GM12878 (cell line): ENCODE measurements at regions of chr7 and their contacts with region 1.

Region 1: GRCh38 chr7:132895231-132895630 is 186.7 kb downstream of the CHCHD3 start:
- DNase-seq: no peak
- ATAC-seq: no peak
- H3K4me3 ChIP-seq: no peak overlapping the region
- H3K27ac ChIP-seq: no peak overlapping the region
- H3K4me1 ChIP-seq: no peaks in the 10 kb centered on the region
- H3K27me3 ChIP-seq: no peaks in the 10 kb centered on the region
- CTCF ChIP-seq: no peak
- EP300 ChIP-seq: no peak
- POLR2A ChIP-seq: no peak
- RAD21 ChIP-seq: no peak

Region 2: DNA sequence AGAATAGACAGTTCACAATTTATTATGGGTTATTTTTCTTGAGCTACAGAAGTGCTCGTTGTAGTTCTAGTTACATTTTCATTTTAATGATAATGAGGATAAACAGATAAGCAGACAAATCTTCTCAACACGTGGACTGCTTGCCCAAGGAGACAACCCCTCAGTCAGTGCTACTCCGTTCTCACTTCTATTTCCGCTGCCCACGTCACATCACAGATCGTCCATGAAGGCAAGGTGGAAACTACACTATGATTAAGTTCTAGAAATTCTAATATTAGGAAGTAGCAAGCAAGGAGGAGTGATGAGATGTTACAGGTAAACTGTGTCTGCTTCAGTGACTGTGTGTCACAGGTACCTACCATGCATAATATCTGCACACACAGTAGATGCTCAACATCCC is 23.8 kb before region 1 on chr7:
- CTCF ChIA-PET with region 1: interaction called, 3 read pairs
- POLR2A ChIA-PET with region 1: interaction called, 3 read pairs
- RAD21 ChIA-PET with region 1: interaction called, 3 read pairs
- SMC1A ChIA-PET with region 1: interaction called, 14 read pairs
- in situ Hi-C with region 1: no loop called
- intact Hi-C with region 1: no loop called
- DNase-seq: no peak
- ATAC-seq: peak; percentile 47
- H3K4me3 ChIP-seq: no peak overlapping the region
- H3K27ac ChIP-seq: peak overlapping the region; percentile 5; the same call in 1 of the 2 replicates
- H3K4me1 ChIP-seq: peaks cover 17% of the 10 kb centered on the region; the same call in 1 of the 2 replicates
- H3K27me3 ChIP-seq: no peaks in the 10 kb centered on the region
- CTCF ChIP-seq: no peak
- EP300 ChIP-seq: no peak
- POLR2A ChIP-seq: no peak
- RAD21 ChIP-seq: no peak

Region 3: GRCh38 chr7:132882714-132883428 is 12.4 kb before region 1 on chr7:
- CTCF ChIA-PET with region 1: interaction called, 8 read pairs
- POLR2A ChIA-PET with region 1: interaction called, 12 read pairs
- RAD21 ChIA-PET with region 1: interaction called, 6 read pairs
- SMC1A ChIA-PET with region 1: interaction called, 12 read pairs
- in situ Hi-C with region 1: no loop called
- intact Hi-C with region 1: no loop called
- DNase-seq: peak; percentile 47
- ATAC-seq: peak; percentile 92
- H3K4me3 ChIP-seq: no peak overlapping the region
- H3K27ac ChIP-seq: peak overlapping the region; percentile 57; the same call in 1 of the 2 replicates
- H3K4me1 ChIP-seq: peaks cover 14% of the 10 kb centered on the region
- H3K27me3 ChIP-seq: no peaks in the 10 kb centered on the region
- CTCF ChIP-seq: no peak
- EP300 ChIP-seq: no peak
- POLR2A ChIP-seq: no peak
- RAD21 ChIP-seq: no peak

Region 4: GRCh38 chr7:132906193-132906835 is 11.1 kb after region 1 on chr7:
- CTCF ChIA-PET with region 1: interaction called, 7 read pairs
- POLR2A ChIA-PET with region 1: interaction called, 4 read pairs
- RAD21 ChIA-PET with region 1: interaction called, 4 read pairs
- SMC1A ChIA-PET with region 1: interaction called, 16 read pairs
- in situ Hi-C with region 1: no loop called
- intact Hi-C with region 1: no loop called
- DNase-seq: no peak
- ATAC-seq: peak; percentile 66; the same call in 2 of the 3 replicates
- H3K4me3 ChIP-seq: no peak overlapping the region
- H3K27ac ChIP-seq: no peak overlapping the region
- H3K4me1 ChIP-seq: peaks cover 9% of the 10 kb centered on the region
- H3K27me3 ChIP-seq: no peaks in the 10 kb centered on the region
- CTCF ChIP-seq: no peak
- EP300 ChIP-seq: 0 out of 4 replicates have a peak, but pooled peaks of 1 of the 2 experiments have one; percentile 24
- POLR2A ChIP-seq: no peak
- RAD21 ChIP-seq: no peak